ENCODE measurements at regions of chr11 and their contacts with region 1.

Region 1: GRCh38 chr11:118791111-118791965 is at the start of gene DDX6:
- DNase-seq: peak; percentile 94
- ATAC-seq: peak; percentile 61
- H3K4me3 Mint-ChIP-seq: peak within 1 kb of the TSS; percentile 99
- H3K27ac Mint-ChIP-seq: peak within 1 kb of the TSS; percentile 100
- H3K4me1 Mint-ChIP-seq: peaks cover 16% of the 10 kb centered on the region
- H3K27me3 Mint-ChIP-seq: no peaks in the 10 kb centered on the region
- total RNA-seq, gene DDX6: 143 to 152 TPM

Region 2: DNA sequence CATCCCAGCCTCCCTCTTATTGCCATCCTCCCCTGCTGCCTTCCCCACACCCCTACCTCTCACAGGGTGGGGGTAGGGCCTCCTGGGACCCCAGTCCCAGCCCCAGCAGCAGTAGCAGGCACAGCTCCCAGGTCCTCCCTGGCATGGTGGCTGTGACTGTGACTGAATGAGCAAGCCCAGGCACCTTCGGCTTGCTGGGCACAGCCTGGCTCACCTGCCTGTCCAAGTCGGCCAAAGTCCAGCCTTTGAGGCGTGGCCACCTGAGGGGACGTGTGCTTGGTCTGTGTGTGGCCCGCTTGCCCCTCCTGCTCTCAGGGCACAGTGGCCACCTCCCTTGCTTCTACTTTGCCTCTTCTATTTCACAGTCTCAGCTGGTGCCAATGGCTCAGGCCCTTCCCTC is 111.9 kb before region 1 on chr11 and contains the start of gene TREH:
- CTCF ChIA-PET with region 1: no interaction called
- POLR2A ChIA-PET with region 1: no interaction called
- DNase-seq: no peak
- ATAC-seq: no peak
- H3K4me3 Mint-ChIP-seq: no peak within 1 kb of the TSS
- H3K27ac Mint-ChIP-seq: no peak within 1 kb of the TSS
- H3K4me1 Mint-ChIP-seq: no peaks in the 10 kb centered on the region
- H3K27me3 Mint-ChIP-seq: peaks cover 12% of the 10 kb centered on the region
- total RNA-seq, gene TREH: not detected

Region 3: DNA sequence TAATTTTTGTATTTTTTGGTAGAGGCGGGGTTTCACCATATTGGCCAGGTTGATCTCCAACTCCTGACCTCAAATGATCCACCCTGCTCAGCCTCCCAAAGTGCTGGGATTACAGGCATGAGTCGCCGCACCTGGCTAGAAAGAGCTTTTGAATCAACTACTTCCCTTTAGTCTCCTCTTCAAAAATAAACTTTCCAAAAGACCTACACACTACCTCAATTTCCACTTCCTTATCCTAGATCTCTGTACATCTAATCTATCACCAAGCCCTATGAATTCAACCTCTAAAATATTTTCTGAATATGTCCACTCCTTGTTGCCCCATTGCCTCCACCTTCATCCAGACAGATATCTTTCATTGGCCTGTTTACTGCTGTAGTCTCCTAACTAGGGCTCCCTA is 12.8 kb after region 1 on chr11:
- CTCF ChIA-PET with region 1: interaction called, 17 read pairs
- POLR2A ChIA-PET with region 1: interaction called, 35 read pairs
- DNase-seq: no peak
- ATAC-seq: no peak
- H3K4me3 Mint-ChIP-seq: no peak overlapping the region
- H3K27ac Mint-ChIP-seq: no peak overlapping the region
- H3K4me1 Mint-ChIP-seq: peaks cover 4% of the 10 kb centered on the region
- H3K27me3 Mint-ChIP-seq: peaks cover 3% of the 10 kb centered on the region

Region 4: GRCh38 chr11:118878163-118878563 is 86.8 kb after region 1 on chr11:
- CTCF ChIA-PET with region 1: interaction called, 17 read pairs
- POLR2A ChIA-PET with region 1: interaction called, 156 read pairs
- DNase-seq: peak; percentile 39
- ATAC-seq: peak; percentile 20
- H3K4me3 Mint-ChIP-seq: no peak overlapping the region
- H3K27ac Mint-ChIP-seq: peak overlapping the region; percentile 78
- H3K4me1 Mint-ChIP-seq: peaks cover 86% of the 10 kb centered on the region
- H3K27me3 Mint-ChIP-seq: no peaks in the 10 kb centered on the region

Region 5: GRCh38 chr11:118895142-118896039 is 104.1 kb after region 1 on chr11:
- CTCF ChIA-PET with region 1: interaction called, 65 read pairs
- POLR2A ChIA-PET with region 1: interaction called, 100 read pairs
- DNase-seq: peak; percentile 75
- ATAC-seq: peak; percentile 68
- H3K4me3 Mint-ChIP-seq: peak overlapping the region; percentile 53
- H3K27ac Mint-ChIP-seq: peak overlapping the region; percentile 83
- H3K4me1 Mint-ChIP-seq: peaks cover 65% of the 10 kb centered on the region
- H3K27me3 Mint-ChIP-seq: no peaks in the 10 kb centered on the region

Region 6: GRCh38 chr11:118917481-118918127 is 126.3 kb after region 1 on chr11:
- CTCF ChIA-PET with region 1: interaction called, 14 read pairs
- POLR2A ChIA-PET with region 1: interaction called, 46 read pairs
- DNase-seq: peak; percentile 70
- ATAC-seq: peak; percentile 17
- H3K4me3 Mint-ChIP-seq: peak overlapping the region; percentile 80
- H3K27ac Mint-ChIP-seq: peak overlapping the region; percentile 96
- H3K4me1 Mint-ChIP-seq: peaks cover 88% of the 10 kb centered on the region
- H3K27me3 Mint-ChIP-seq: no peaks in the 10 kb centered on the region

Region 7: GRCh38 chr11:119018074-119018938 is 227.0 kb after region 1 on chr11 and contains the starts of genes RPS25 and TRAPPC4:
- CTCF ChIA-PET with region 1: no interaction called
- POLR2A ChIA-PET with region 1: interaction called, 17 read pairs
- DNase-seq: peak; percentile 98
- ATAC-seq: peak; percentile 93
- H3K4me3 Mint-ChIP-seq: peak within 1 kb of the TSS; percentile 99
- H3K27ac Mint-ChIP-seq: peak within 1 kb of the TSS; percentile 100
- H3K4me1 Mint-ChIP-seq: peaks cover 48% of the 10 kb centered on the region
- H3K27me3 Mint-ChIP-seq: no peaks in the 10 kb centered on the region
- total RNA-seq, gene RPS25: 1,115 to 1,170 TPM
- total RNA-seq, gene TRAPPC4: 58.6 to 65.0 TPM